Left cardiac atrium (tissue), 4 donors: ENCODE measurements at regions of chr5 and their contacts with region 1.

Region 1: GRCh38 chr5:135551593-135552447 is 16.1 kb upstream of the NEUROG1 start:
- DNase-seq: peak; percentile 59
- ATAC-seq: peak; percentile 82 to 86

Region 2: GRCh38 chr5:135466178-135467050 is 85.4 kb before region 1 on chr5:
- intact Hi-C with region 1: loop called (anchors 1 to 2 kb)
- DNase-seq: peak; percentile 81
- ATAC-seq: peak; percentile 95 to 96

Region 3: DNA sequence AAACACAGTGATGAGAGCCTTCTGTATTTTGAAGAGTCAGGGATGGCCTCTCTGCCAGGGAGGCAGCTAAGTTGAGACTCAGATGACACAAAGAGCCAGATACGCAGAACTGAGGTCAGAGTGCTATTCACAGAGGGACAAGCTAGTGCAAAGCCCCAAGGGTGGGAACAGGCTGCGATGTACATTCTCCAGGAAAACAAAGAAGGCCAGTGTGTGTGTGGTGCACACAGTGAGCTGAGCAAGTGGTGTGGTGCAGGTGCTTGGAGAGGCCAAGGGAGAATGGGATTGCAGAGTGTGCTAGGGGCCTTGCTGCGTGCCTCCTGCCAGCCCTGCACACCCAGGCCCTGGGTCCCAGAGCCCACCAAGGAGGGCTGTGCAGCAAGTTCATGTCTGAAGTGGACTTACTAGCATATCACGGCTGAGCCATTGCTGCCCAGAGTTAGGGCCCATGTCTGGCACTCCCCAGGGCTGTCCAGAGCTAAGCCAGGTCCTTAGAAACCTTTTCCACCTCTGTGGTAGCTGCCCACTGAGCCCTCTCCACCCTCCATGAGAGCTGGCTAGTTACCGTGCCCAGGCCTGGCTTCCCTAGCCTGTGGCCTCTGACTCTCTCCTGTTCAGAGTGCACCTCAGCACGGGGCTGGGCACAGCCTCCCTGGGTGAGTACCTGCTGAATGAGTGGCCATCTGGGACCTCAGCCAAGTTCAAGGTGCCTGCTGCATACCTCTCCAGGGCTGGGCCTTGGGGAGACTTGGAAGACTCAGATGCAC is 291.9 kb after region 1 on chr5:
- intact Hi-C with region 1: no loop called
- DNase-seq: no peak
- ATAC-seq: peak in 1 of 2 donors; percentile 14